Activated CD4-positive, alpha-beta memory T cell treated with anti-CD3 and anti-CD28 coated beads for 36 hours (primary cell): ENCODE measurements at regions of chr1 and their contacts with region 1.

Region 1: DNA sequence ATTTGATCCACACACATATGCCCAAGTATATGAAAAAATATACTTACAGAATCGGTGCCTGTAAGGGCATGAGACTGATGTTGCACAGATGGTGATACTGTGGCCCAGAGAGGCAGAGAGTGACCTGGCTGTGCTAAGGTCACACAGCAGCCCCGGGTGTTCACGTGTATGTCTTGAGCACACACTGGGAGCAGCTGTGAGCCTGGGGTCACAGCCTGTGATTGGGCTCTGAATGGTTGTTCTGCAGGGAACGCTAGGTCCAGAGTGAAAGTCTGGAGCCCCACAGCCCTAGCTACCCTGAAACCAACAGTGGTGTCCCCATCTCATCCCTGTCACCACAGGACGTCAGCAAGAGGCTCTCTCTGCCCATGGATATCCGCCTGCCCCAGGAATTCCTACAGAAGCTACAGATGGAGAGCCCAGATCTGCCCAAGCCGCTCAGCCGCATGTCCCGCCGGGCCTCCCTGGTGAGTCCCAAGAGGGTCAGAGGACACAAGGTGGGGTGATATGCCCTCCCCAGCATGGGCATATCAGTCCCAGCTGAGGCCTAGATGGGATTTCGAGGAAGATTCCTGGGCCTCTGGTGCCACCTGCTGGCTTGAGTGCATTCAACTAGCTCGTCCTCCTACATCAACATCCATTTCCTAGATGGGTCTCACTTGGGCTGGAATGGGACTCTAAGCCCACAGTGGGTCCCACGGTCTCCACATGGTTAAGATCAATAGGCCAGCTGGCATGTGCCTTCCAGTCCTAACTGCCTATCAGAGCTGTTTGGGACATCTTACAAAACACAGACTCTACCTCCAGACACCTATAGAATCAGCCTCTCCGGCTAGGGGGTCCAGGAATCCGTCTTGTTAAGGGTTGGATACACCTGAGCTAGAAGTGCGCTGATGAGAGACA is 19.7 kb downstream of the CDK18 start:
- DNase-seq: peak; percentile 82
- H3K4me3 Mint-ChIP-seq: no peak overlapping the region
- H3K27ac Mint-ChIP-seq: no peak overlapping the region
- H3K4me1 Mint-ChIP-seq: no peaks in the 10 kb centered on the region
- H3K27me3 Mint-ChIP-seq: peaks cover 2% of the 10 kb centered on the region

Region 2: GRCh38 chr1:205300886-205301821 is 223.0 kb before region 1 on chr1:
- CTCF ChIA-PET with region 1: no interaction called
- POLR2A ChIA-PET with region 1: no interaction called
- intact Hi-C with region 1: no loop called
- DNase-seq: no peak
- H3K4me3 Mint-ChIP-seq: no peak overlapping the region
- H3K27ac Mint-ChIP-seq: no peak overlapping the region
- H3K4me1 Mint-ChIP-seq: peaks cover 33% of the 10 kb centered on the region
- H3K27me3 Mint-ChIP-seq: no peaks in the 10 kb centered on the region

Region 3: GRCh38 chr1:205321164-205321958 is 202.8 kb before region 1 on chr1 and contains the start of gene NUAK2:
- CTCF ChIA-PET with region 1: interaction called, 19 read pairs
- POLR2A ChIA-PET with region 1: no interaction called
- intact Hi-C with region 1: no loop called
- DNase-seq: peak; percentile 89
- H3K4me3 Mint-ChIP-seq: peak within 1 kb of the TSS; percentile 88
- H3K27ac Mint-ChIP-seq: peak within 1 kb of the TSS; percentile 72
- H3K4me1 Mint-ChIP-seq: peaks cover 60% of the 10 kb centered on the region
- H3K27me3 Mint-ChIP-seq: peaks cover 2% of the 10 kb centered on the region
- total RNA-seq, gene NUAK2: 4.4 to 4.5 TPM

Region 4: DNA sequence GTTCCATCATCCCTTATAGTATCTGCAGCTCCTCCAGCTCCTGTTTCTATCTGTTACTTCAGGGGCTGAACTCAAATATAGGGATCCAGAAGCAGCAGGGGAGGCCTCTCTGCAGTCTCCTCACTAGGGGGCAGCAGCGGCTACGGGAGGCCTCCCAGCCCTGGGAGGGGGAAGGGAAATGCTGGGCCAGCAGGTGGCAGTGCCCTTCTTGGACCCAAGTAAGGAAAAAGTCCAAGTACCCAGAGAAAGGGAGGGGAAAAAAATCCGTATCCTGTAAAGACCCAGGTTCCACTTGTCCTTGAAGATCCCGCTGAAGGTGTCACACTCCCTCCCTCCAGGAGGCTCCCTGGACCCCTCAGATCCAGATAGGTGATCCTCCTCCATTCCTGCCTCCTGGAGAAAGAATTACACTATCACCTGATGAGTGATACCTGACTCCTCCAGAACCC is 188.5 kb before region 1 on chr1:
- CTCF ChIA-PET with region 1: interaction called, 79 read pairs
- POLR2A ChIA-PET with region 1: no interaction called
- intact Hi-C with region 1: loop called (anchors 1 kb)
- DNase-seq: peak; percentile 89
- H3K4me3 Mint-ChIP-seq: no peak overlapping the region
- H3K27ac Mint-ChIP-seq: no peak overlapping the region
- H3K4me1 Mint-ChIP-seq: peaks cover 3% of the 10 kb centered on the region
- H3K27me3 Mint-ChIP-seq: no peaks in the 10 kb centered on the region

Region 5: GRCh38 chr1:205535866-205536758 is 12.0 kb after region 1 on chr1:
- CTCF ChIA-PET with region 1: interaction called, 25 read pairs
- POLR2A ChIA-PET with region 1: no interaction called
- intact Hi-C with region 1: no loop called
- DNase-seq: peak; percentile 7
- H3K4me3 Mint-ChIP-seq: no peak overlapping the region
- H3K27ac Mint-ChIP-seq: no peak overlapping the region
- H3K4me1 Mint-ChIP-seq: peaks cover 8% of the 10 kb centered on the region
- H3K27me3 Mint-ChIP-seq: peaks cover 10% of the 10 kb centered on the region